Mammary epithelial cell (primary cell): ENCODE measurements at regions of chr12 and their contacts with region 1.

Region 1: DNA sequence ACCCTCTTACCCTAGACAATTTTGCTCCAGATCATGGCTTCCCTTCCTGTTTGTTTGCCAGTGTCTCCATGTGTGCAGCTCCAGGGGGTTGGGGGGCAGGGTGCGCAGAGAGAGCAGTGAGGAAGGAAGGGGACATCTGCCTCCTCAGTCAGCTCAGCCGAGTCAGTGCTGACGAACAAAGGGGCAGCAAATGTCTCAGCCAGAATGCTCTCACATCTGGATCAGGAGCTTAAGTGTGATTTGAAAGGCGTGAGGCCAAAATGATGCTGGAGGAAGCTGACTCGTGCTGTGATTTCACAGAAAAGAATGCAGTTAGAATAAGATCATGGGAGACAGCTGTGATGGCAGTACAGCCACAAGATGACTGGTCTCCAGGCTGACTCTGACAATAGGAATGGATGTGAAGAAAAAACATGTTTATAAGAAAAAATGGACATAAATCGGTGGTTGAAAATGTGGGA is 27.1 kb upstream of the CDK17 start:
- DNase-seq: peak; percentile 99
- H3K4me3 ChIP-seq: peak overlapping the region in 2 of 3 experiments; percentile 16 to 43
- H3K27ac ChIP-seq: peak overlapping the region; percentile 99
- H3K4me1 ChIP-seq: peaks cover 43% of the 10 kb centered on the region
- H3K27me3 ChIP-seq: no peaks in the 10 kb centered on the region
- CTCF ChIP-seq: no peak

Region 2: GRCh38 chr12:96194971-96195844 is 232.1 kb before region 1 on chr12:
- CTCF ChIA-PET with region 1: no interaction called
- dilution Hi-C with region 1: no loop called
- in situ Hi-C with region 1: no loop called
- intact Hi-C with region 1: loop called (anchors 5 kb)
- DNase-seq: peak; percentile 84
- H3K4me3 ChIP-seq: peak overlapping the region; percentile 95 to 99 (median 98)
- H3K27ac ChIP-seq: peak overlapping the region; percentile 99
- H3K4me1 ChIP-seq: peaks cover 30% of the 10 kb centered on the region
- H3K27me3 ChIP-seq: no peaks in the 10 kb centered on the region
- CTCF ChIP-seq: no peak

Region 3: DNA sequence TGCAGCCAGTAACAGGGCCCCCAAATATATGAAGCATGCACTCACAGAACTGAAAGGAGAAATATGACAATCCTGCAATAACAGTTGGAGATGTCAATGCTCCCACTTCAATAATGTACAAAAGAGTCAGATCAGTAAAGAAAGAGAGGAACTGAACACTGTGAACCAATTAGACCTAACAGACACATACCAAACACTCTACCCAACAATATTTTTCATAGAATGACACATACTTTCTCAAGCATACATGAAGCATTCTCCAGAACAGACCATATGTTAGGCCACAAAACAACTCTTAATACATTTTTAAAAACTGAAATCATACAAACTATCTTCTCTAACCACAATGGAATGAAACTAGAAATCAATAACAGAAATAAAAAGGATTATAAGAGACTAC is 153.0 kb before region 1 on chr12:
- CTCF ChIA-PET with region 1: no interaction called
- dilution Hi-C with region 1: no loop called
- in situ Hi-C with region 1: no loop called
- intact Hi-C with region 1: no loop called
- DNase-seq: peak; percentile 24
- H3K4me3 ChIP-seq: no peak overlapping the region
- H3K27ac ChIP-seq: no peak overlapping the region
- H3K4me1 ChIP-seq: no peaks in the 10 kb centered on the region
- H3K27me3 ChIP-seq: no peaks in the 10 kb centered on the region
- CTCF ChIP-seq: no peak

Region 4: DNA sequence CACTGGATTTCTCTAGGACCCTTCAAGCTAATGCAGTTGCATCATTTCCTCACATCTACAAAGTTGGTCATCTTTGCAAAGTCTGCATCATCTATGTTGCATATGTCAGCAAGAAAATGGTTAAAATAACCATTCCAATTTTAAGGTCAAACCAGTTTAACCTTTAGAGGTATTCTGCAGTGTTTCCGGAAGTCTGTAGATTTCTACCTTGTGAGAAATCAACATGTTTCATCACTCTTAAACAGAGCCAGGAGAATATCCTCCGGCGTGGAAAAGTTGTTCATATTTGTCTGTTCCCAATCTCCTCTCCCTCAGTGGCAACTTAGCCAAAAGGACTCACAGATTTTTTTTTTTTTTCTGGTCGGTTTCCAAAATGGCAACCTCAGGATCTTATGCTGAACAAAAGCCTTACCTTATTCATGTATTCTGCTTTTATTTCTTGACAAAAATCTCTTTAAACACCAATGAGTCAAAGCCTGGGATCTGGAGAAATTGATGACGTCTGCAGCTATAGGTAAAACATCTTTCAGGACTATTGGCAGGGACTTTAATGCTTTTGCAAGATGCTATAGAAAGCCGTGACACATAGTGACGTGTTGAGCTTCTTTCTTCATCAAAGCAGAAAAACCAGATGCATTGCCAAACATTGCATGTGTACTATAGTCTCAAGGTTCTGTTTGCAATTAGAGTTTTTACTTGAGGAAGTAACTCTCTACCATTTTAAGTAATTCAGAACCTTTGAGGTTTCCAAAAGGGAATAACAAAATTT is 11.1 kb before region 1 on chr12:
- CTCF ChIA-PET with region 1: no interaction called
- dilution Hi-C with region 1: no loop called
- in situ Hi-C with region 1: no loop called
- intact Hi-C with region 1: loop called (anchors 1 kb)
- DNase-seq: peak; percentile 95
- H3K4me3 ChIP-seq: no peak overlapping the region
- H3K27ac ChIP-seq: peak overlapping the region; percentile 73
- H3K4me1 ChIP-seq: peaks cover 26% of the 10 kb centered on the region
- H3K27me3 ChIP-seq: no peaks in the 10 kb centered on the region
- CTCF ChIP-seq: no peak

Region 5: GRCh38 chr12:96445691-96446583 is 18.6 kb after region 1 on chr12:
- CTCF ChIA-PET with region 1: no interaction called
- dilution Hi-C with region 1: no loop called
- in situ Hi-C with region 1: no loop called
- intact Hi-C with region 1: loop called (anchors 1 kb)
- DNase-seq: peak; percentile 98
- H3K4me3 ChIP-seq: no peak overlapping the region
- H3K27ac ChIP-seq: peak overlapping the region; percentile 99
- H3K4me1 ChIP-seq: peaks cover 33% of the 10 kb centered on the region
- H3K27me3 ChIP-seq: no peaks in the 10 kb centered on the region
- CTCF ChIP-seq: no peak

Region 6: DNA sequence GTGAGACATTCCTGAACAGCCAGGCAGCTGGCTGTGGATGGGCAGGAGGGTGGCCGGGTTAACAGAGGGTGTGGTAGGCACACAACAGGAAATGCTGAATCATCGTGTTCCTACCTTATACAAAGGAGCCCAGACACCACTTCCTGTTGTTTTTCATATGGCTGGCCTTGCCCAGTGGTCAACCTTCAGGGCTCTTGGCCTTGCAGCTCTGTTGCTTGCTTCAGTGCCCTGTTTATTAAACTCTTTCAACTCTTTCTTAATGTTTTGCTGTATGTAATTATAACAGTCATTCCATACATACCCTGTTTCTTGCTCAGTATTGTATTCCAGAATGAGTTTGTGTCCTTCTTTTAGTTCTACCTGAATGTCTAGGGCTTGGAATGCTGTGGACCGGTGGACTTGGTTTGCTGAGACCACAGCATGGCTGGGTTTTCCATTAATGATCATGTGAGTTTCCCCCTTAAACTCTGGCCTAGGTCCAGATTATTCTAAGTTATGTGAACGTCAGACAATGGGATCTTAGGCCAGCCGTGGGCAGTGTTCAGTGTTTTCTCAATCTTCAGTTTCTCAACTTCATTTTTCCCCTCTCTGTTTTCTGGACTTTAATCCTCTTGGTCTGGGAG is 74.0 kb after region 1 on chr12:
- CTCF ChIA-PET with region 1: no interaction called
- dilution Hi-C with region 1: no loop called
- in situ Hi-C with region 1: no loop called
- intact Hi-C with region 1: loop called (anchors 5 kb)
- DNase-seq: peak; percentile 88
- H3K4me3 ChIP-seq: no peak overlapping the region
- H3K27ac ChIP-seq: peak overlapping the region; percentile 93
- H3K4me1 ChIP-seq: peaks cover 31% of the 10 kb centered on the region
- H3K27me3 ChIP-seq: no peaks in the 10 kb centered on the region
- CTCF ChIP-seq: no peak